ENCODE measurements at regions of chr6 and their contacts with region 1.

Region 1: DNA sequence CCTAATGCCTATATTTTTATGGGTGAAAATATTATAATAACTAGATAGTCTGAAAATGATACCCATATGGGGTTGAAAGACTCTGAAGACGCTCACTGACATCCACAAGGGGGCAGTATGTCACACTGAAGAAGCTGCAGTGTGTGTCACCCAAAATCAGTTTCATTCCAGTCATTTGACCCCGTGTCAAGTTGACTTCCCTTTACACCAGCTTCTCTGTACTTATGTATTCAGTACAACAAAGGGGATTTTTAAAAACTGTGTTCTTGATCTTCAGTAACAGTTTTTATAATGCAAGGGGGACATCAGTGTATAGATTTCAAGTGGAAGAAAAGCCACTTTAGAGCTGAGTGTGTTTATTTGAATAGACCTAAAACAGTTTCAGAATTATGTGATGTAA is 19.3 kb downstream of the FAXC start:
- DNase-seq: peak; percentile 36
- H3K4me3 ChIP-seq: no peak overlapping the region
- H3K27ac ChIP-seq: no peak overlapping the region
- H3K27me3 ChIP-seq: no peaks in the 10 kb centered on the region
- CTCF ChIP-seq: peak; percentile 81

Region 2: GRCh38 chr6:99312354-99312753 is 17.8 kb before region 1 on chr6:
- CTCF ChIA-PET with region 1: interaction called, 31 read pairs
- POLR2A ChIA-PET with region 1: no interaction called
- DNase-seq: no peak
- H3K4me3 ChIP-seq: no peak overlapping the region
- H3K27ac ChIP-seq: no peak overlapping the region
- H3K27me3 ChIP-seq: no peaks in the 10 kb centered on the region
- CTCF ChIP-seq: no peak

Region 3: DNA sequence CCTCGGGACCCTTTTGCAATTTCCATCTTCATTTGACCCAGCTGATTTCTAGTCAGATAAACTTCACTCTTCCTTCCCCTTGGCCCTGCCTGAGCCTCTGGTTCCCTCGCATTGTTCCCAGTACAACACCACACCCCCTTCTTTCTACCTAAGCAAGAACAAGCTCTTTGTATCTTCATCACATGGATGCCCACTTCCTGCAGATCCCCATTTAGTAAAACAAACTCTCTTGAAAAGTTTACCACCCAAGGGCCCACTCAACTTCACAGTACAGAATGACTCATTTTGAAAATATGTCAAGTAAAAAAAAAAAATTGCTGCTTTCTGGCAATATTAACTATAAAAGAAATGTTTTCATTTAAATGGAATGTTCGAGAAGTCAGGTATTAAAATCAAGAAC is 14.1 kb after region 1 on chr6:
- CTCF ChIA-PET with region 1: interaction called, 71 read pairs
- POLR2A ChIA-PET with region 1: no interaction called
- DNase-seq: peak; percentile 11
- H3K4me3 ChIP-seq: no peak overlapping the region
- H3K27ac ChIP-seq: no peak overlapping the region
- H3K27me3 ChIP-seq: no peaks in the 10 kb centered on the region
- CTCF ChIP-seq: no peak

Region 4: DNA sequence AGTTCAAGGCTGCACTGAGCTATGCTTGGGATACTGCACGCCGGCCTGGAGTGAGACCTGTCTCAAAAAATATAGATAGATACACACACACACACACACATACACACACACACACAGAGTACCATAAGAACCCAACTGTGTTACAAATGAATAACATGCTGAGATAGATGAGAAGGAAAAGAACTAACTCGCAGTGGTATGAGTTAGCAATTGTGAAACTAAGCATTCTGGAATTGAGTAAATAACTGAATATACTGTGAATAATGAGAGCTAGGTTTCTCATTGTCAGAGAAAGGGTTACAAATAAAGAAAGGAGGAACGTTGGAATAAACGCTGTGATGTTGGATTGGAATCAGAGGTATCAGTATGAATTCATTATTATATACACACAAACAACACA is 33.9 kb after region 1 on chr6:
- CTCF ChIA-PET with region 1: interaction called, 13 read pairs
- POLR2A ChIA-PET with region 1: no interaction called
- DNase-seq: no peak
- H3K4me3 ChIP-seq: no peak overlapping the region
- H3K27ac ChIP-seq: no peak overlapping the region
- H3K27me3 ChIP-seq: peaks cover 2% of the 10 kb centered on the region
- CTCF ChIP-seq: no peak

Region 5: GRCh38 chr6:99393698-99394531 is 63.8 kb after region 1 on chr6 and contains the start of gene COQ3:
- CTCF ChIA-PET with region 1: interaction called, 30 read pairs
- POLR2A ChIA-PET with region 1: interaction called, 6 read pairs
- DNase-seq: peak; percentile 60
- H3K4me3 ChIP-seq: peak within 1 kb of the TSS; percentile 85
- H3K27ac ChIP-seq: peak within 1 kb of the TSS; percentile 82
- H3K27me3 ChIP-seq: no peaks in the 10 kb centered on the region
- CTCF ChIP-seq: no peak
- polyA plus RNA-seq, gene COQ3: 8.5 and 11.0 TPM in 2 replicates

Region 6: GRCh38 chr6:99425647-99426453 is 95.7 kb after region 1 on chr6:
- CTCF ChIA-PET with region 1: interaction called, 16 read pairs
- POLR2A ChIA-PET with region 1: no interaction called
- DNase-seq: peak; percentile 49
- H3K4me3 ChIP-seq: peak overlapping the region; percentile 93
- H3K27ac ChIP-seq: peak overlapping the region; percentile 99
- H3K27me3 ChIP-seq: no peaks in the 10 kb centered on the region
- CTCF ChIP-seq: peak; percentile 66